Natural killer cell (primary cell): ENCODE measurements at regions of chr17 and their contacts with region 1.

Region 1: DNA sequence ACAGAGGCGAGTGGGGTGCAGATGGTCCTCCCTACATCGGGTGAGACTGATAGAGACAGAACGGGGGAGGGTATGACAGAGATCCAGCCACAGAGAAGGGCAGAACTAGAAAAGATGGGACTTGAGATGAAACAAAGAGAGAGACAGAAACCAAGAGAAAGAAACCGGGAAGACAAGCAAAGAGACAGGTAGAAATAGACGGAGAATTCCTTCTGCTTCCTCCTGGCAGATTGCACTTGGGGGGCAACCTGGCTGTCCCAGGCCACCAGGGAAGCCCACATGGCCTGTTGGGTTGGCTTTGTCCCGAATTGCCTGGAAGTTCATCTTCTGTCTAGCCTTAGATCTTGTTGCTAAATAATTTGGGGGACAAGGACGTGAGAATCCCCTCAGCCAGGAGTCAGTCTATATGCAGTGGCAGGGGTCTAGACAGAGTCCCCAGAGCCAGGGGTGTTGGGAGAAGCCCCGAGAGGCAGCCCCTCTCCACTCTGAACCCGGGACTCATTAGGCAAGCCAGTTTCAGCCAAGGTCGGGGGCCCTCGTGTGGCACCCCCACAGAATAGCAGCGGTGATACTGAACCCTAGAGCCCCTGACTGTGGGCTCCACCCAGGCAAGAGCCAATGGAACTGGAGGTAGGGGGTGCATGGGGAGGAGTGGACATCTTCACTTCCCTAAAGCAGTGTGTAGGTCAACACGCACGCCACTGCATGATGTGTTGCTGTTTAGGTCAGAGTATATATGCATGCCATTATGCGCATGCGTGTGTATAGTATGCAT is 627 bp upstream of the TSPOAP1 start:
- DNase-seq: peak; percentile 70 to 83
- ATAC-seq: peak; percentile 32 to 67 (median 33)
- H3K4me3 ChIP-seq: peak overlapping the region; percentile 94
- H3K4me3 Mint-ChIP-seq: peak overlapping the region; percentile 90
- H3K27ac ChIP-seq: peak overlapping the region; percentile 84
- H3K27ac Mint-ChIP-seq: peak overlapping the region; percentile 87 to 93
- H3K4me1 ChIP-seq: peaks cover 62% of the 10 kb centered on the region
- H3K4me1 Mint-ChIP-seq: peaks cover 68 to 86% of the 10 kb centered on the region in 2 donors
- H3K27me3 ChIP-seq: no peaks in the 10 kb centered on the region
- H3K27me3 Mint-ChIP-seq: no peaks in the 10 kb centered on the region
- CTCF ChIP-seq: peak; percentile 75

Region 2: GRCh38 chr17:58303971-58304725 is 25.1 kb before region 1 on chr17:
- intact Hi-C with region 1: loop called (anchors 2 kb)
- DNase-seq: peak; percentile 55 to 78
- ATAC-seq: peak; percentile 79 to 98 (median 85)
- H3K4me3 ChIP-seq: no peak overlapping the region
- H3K4me3 Mint-ChIP-seq: no peak overlapping the region
- H3K27ac ChIP-seq: no peak overlapping the region
- H3K27ac Mint-ChIP-seq: peak overlapping the region in 1 of 2 donors; percentile 38
- H3K4me1 ChIP-seq: peaks cover 22% of the 10 kb centered on the region
- H3K4me1 Mint-ChIP-seq: peaks cover 0 to 15% of the 10 kb centered on the region in 2 donors
- H3K27me3 ChIP-seq: no peaks in the 10 kb centered on the region
- H3K27me3 Mint-ChIP-seq: no peaks in the 10 kb centered on the region
- CTCF ChIP-seq: peak; percentile 76

Region 3: GRCh38 chr17:58344047-58344790 is 15.0 kb after region 1 on chr17:
- intact Hi-C with region 1: loop called (anchors 1 kb)
- DNase-seq: peak; percentile 83 to 97
- ATAC-seq: peak; percentile 75 to 93 (median 87)
- H3K4me3 ChIP-seq: peak overlapping the region; percentile 59
- H3K4me3 Mint-ChIP-seq: peak overlapping the region; percentile 90
- H3K27ac ChIP-seq: peak overlapping the region; percentile 99
- H3K27ac Mint-ChIP-seq: peak overlapping the region; percentile 87 to 93
- H3K4me1 ChIP-seq: peaks cover 74% of the 10 kb centered on the region
- H3K4me1 Mint-ChIP-seq: peaks cover 79 to 88% of the 10 kb centered on the region in 2 donors
- H3K27me3 ChIP-seq: no peaks in the 10 kb centered on the region
- H3K27me3 Mint-ChIP-seq: no peaks in the 10 kb centered on the region
- CTCF ChIP-seq: no peak

Region 4: DNA sequence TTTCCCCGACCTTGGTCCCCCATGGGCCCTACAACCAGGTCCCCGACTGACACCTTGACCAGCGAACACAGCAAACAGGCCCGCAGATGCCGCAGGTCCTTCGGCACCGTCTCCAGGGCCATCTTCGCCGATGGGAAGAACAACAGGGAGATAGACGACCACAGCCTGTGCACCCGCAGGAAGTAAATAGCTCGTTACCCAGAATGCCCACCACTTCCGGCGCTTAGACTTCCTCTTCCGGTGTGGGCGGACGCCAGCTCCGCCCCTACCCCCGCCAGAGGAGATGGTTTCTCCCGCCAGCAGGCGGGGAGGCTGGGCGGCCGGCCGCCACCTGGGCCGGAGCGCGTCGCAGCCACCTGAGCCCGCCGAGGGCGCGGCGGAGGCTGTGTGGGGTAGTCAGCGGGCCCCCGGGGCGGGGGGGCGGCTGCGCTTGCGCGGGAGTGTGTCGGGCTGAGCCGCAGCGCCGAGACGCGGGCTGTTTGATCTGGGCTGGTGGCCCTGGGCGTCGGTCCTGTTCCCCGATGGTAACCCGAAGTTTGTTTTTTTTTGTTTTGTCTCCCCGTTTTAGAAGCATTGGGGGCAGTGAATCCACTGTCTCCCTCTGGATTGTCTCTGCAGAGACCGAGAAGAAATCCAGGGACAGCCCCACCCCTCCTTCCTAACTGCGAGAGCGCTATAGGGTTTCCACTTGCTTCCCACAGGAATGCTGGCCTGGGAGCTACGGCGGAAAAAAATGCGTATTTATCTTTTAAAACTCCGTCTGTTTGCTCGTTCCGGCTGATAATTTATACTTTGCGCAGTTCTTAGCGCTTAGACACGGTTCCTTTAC is 23.0 kb after region 1 on chr17 and contains the start of gene SUPT4H1:
- intact Hi-C with region 1: loop called (anchors 2 kb)
- DNase-seq: peak; percentile 88 to 97
- ATAC-seq: peak; percentile 91 to 97 (median 95)
- H3K4me3 ChIP-seq: peak within 1 kb of the TSS; percentile 87
- H3K4me3 Mint-ChIP-seq: peak within 1 kb of the TSS; percentile 98
- H3K27ac ChIP-seq: peak within 1 kb of the TSS; percentile 93
- H3K27ac Mint-ChIP-seq: peak within 1 kb of the TSS; percentile 96 to 97
- H3K4me1 ChIP-seq: peaks cover 23% of the 10 kb centered on the region
- H3K4me1 Mint-ChIP-seq: peaks cover 65 to 68% of the 10 kb centered on the region in 2 donors
- H3K27me3 ChIP-seq: no peaks in the 10 kb centered on the region
- H3K27me3 Mint-ChIP-seq: no peaks in the 10 kb centered on the region
- CTCF ChIP-seq: no peak
- total RNA-seq, gene SUPT4H1: 55.9 to 68.3 (median 68.1) TPM